ENCODE measurements at regions of chr20 and their contacts with region 1.

Region 1: DNA sequence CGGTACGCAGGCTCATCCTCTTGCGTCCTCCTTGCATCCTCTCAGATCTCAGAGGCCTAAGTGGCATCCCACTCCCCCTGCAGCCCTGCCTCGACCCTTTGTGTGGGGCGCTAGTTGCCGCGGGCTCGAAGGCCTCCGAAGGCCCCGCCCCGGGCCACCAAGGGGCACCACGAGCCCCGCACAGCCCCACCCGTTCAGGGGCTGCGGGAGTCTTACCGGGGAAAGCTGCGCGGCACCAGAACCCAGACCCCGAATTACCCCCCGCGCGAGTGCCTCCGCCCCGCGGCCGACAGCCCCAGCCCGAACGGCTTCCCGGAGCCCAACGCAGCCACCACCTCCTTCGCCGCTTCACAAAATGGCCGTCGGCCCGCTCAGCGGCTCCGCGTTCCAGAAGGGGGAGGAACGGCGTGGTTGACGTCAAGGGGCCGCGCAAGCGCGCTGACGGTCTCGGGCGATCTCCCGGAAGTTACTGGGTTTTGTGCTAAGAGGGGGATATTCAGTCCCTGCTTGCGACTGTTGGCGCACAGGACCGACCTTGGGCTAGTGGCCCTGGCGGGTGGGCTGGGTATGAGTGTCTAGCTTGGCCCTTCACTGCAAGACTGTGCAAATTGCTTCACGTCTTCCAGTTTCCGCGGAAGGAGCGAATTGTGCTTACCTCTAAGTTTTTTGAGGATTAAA is at the starts of genes CPNE1 and RBM12:
- DNase-seq: peak; percentile 96
- ATAC-seq: peak; percentile 82
- H3K4me3 Mint-ChIP-seq: peak within 1 kb of the TSS; percentile 79
- H3K27ac Mint-ChIP-seq: peak within 1 kb of the TSS; percentile 99
- H3K4me1 Mint-ChIP-seq: peaks cover 35% of the 10 kb centered on the region
- H3K27me3 Mint-ChIP-seq: no peaks in the 10 kb centered on the region
- total RNA-seq, gene CPNE1: 296 to 327 TPM
- total RNA-seq, gene RBM12: 116 to 120 TPM

Region 2: GRCh38 chr20:35454881-35455609 is 209.6 kb before region 1 on chr20 and contains the start of gene CEP250:
- POLR2A ChIA-PET with region 1: interaction called, 13 read pairs
- DNase-seq: peak; percentile 95
- ATAC-seq: peak; percentile 93
- H3K4me3 Mint-ChIP-seq: peak within 1 kb of the TSS; percentile 90
- H3K27ac Mint-ChIP-seq: peak within 1 kb of the TSS; percentile 96
- H3K4me1 Mint-ChIP-seq: peaks cover 24% of the 10 kb centered on the region
- H3K27me3 Mint-ChIP-seq: no peaks in the 10 kb centered on the region
- total RNA-seq, gene CEP250: 82.9 to 84.5 TPM

Region 3: DNA sequence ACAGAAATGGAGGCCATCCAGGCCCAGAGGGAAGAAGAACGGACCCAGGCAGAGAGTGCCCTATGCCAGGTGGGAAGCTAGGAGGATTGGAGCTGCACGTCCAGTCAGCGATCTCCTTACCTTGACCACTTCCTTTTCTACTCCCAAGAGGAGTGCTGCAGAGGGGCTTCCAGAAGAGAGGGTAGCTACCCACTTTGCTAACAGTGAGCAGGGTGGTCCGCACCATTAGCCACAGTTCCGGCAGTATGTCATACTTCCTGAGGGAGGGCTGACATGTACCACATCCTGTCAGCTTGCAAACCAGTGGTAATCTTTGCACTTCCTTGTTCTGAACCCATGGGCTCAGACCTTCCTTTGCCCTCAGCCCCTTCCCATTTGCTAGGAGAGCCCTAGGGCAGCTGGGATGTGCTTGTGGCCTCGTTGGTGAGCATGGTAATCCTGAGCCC is 173.9 kb before region 1 on chr20:
- POLR2A ChIA-PET with region 1: interaction called, 11 read pairs
- DNase-seq: peak; percentile 70
- ATAC-seq: peak; percentile 98
- H3K4me3 Mint-ChIP-seq: peak overlapping the region; percentile 99
- H3K27ac Mint-ChIP-seq: peak overlapping the region; percentile 99
- H3K4me1 Mint-ChIP-seq: peaks cover 33% of the 10 kb centered on the region
- H3K27me3 Mint-ChIP-seq: no peaks in the 10 kb centered on the region

Region 4: GRCh38 chr20:35699127-35699975 is 34.7 kb after region 1 on chr20 and contains the starts of genes NFS1 and ROMO1:
- POLR2A ChIA-PET with region 1: interaction called, 10 read pairs
- DNase-seq: peak; percentile 88
- ATAC-seq: peak; percentile 91
- H3K4me3 Mint-ChIP-seq: peak within 1 kb of the TSS; percentile 93
- H3K27ac Mint-ChIP-seq: peak within 1 kb of the TSS; percentile 92
- H3K4me1 Mint-ChIP-seq: peaks cover 26% of the 10 kb centered on the region
- H3K27me3 Mint-ChIP-seq: no peaks in the 10 kb centered on the region
- total RNA-seq, gene NFS1: 33.1 to 33.8 TPM
- total RNA-seq, gene ROMO1: 96.9 to 112 TPM

Region 5: DNA sequence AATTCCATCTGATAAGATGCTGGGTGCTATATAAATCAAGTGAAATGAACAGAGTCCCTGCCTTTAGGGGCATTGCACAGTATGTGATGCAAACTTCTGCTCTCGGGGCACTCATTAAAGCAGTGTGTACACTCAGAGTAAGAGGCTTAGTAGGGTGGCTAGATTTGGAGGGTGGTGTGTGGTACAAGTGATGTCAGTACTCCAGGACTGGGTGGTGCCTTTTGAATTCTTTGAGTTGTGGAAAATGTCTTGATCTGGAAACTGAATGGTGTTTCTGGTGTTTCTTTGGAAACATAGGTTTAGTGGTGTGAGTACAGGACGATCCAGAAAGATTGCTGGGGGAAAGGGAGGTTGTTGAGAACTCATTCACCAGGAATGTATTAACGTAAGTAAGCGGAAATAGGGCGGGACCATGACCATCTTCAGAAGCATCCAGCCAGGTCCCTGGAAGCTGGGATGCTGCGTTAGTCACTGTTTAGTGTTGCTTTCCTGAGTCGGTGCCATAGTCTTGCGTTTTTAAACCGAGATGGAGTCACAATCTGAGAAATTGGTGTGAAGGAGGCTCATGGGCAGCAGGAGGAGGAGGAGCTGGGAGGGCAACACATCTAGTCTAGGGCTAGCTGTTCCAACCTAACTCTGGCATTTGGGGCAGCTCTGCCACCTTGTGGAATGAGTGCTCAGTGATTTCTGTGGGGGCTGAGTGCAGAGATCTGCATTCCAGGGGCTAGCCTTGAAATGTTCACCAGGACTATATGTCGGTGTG is 219.3 kb after region 1 on chr20:
- POLR2A ChIA-PET with region 1: no interaction called
- DNase-seq: peak; percentile 57
- ATAC-seq: peak; percentile 93
- H3K4me3 Mint-ChIP-seq: no peak overlapping the region
- H3K27ac Mint-ChIP-seq: peak overlapping the region; percentile 22
- H3K4me1 Mint-ChIP-seq: peaks cover 11% of the 10 kb centered on the region
- H3K27me3 Mint-ChIP-seq: no peaks in the 10 kb centered on the region

Region 6: GRCh38 chr20:36167826-36168531 is 503.3 kb after region 1 on chr20:
- POLR2A ChIA-PET with region 1: no interaction called
- DNase-seq: no peak
- ATAC-seq: no peak
- H3K4me3 Mint-ChIP-seq: no peak overlapping the region
- H3K27ac Mint-ChIP-seq: no peak overlapping the region
- H3K4me1 Mint-ChIP-seq: no peaks in the 10 kb centered on the region
- H3K27me3 Mint-ChIP-seq: peaks cover 12% of the 10 kb centered on the region